ENCODE measurements at regions of chr22 and their contacts with region 1.

Region 1: DNA sequence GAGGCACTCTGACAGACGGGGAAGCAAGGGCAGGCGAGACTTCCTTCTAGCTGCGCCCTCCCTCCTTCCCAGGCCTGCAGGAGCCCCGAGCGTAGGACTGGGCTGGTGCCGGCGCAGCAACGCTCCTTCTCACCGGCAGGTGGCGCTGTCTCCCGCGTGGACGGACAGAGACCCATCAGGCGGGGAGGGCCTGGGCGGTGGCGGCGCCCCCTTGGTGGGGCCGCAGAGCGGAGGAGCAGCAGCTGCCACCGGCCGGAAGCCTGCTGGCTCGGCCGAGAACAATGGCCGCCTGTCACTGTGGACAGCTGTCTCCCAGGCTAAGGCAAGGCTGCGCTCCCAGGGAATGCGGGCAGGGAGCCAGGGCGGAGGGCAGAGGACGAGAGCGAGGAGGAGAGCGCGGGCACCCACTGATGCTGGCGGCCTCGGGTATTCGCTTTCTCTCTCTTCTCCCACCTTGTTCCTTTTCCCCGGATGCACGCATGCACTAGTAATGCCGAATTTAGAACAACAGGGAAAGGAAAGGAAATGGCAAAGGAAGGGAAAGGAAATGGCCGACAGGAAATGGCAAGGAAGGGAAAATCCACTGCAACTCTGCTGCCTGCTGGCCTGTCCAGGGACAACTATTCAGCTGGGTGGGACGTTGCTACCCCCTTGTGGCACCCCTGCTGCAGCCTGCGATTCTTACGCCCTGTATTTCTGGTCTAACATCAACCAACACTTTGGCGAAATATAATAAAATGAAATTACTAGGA is 14.4 kb downstream of the PPM1F start:
- DNase-seq: peak; percentile 85
- H3K4me3 ChIP-seq: peak overlapping the region; percentile 59
- H3K27ac ChIP-seq: peak overlapping the region; percentile 97
- H3K27me3 ChIP-seq: no peaks in the 10 kb centered on the region
- CTCF ChIP-seq: peak; percentile 97

Region 2: DNA sequence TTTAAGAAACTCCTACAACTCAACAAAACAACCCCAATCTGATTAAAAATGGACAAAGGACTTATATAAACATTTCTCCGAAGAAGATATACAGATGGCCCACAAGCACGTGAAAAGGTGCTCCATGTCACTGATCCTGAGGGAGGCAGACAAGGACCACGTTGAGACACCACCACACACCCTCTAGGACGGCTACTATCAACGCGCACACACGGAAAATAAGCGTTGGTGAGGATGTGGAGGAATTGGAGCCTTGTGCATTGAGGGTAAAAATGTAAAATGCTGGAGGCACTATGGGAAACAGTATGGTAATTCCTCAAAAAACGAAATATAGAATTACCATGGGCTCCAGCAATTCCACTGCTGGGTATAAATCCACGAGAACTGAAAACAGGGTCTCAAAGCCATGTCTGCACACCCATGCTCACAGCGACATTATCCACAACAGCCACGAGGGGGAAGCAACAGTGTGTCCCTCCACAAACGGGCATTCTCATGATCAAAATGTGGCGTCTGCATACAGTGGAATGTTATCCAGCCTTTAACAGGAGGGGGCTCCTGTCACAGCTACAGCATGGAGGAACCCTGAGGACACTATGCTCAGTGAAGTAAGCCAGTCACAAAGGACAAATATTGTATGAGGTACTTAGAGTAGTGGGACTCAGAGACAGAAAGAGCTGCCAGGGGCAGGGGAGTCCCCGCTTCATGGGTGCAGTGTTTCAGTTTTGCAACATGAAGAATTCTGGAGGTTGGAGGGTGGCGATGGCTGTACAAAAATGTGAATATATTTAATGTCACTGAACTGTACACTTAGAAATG is 225.1 kb before region 1 on chr22:
- CTCF ChIA-PET with region 1: interaction called, 32 read pairs
- POLR2A ChIA-PET with region 1: no interaction called
- DNase-seq: peak; percentile 52
- H3K4me3 ChIP-seq: no peak overlapping the region; the same call in 1 of the 2 replicates
- H3K27ac ChIP-seq: no peak overlapping the region
- H3K27me3 ChIP-seq: no peaks in the 10 kb centered on the region
- CTCF ChIP-seq: peak; percentile 90

Region 3: GRCh38 chr22:21867528-21868266 is 70.5 kb before region 1 on chr22 and contains the start of gene MAPK1:
- CTCF ChIA-PET with region 1: interaction called, 10 read pairs
- POLR2A ChIA-PET with region 1: no interaction called
- DNase-seq: peak; percentile 33
- H3K4me3 ChIP-seq: peak within 1 kb of the TSS; percentile 90
- H3K27ac ChIP-seq: peak within 1 kb of the TSS; percentile 39
- H3K27me3 ChIP-seq: no peaks in the 10 kb centered on the region
- CTCF ChIP-seq: peak; percentile 34
- polyA plus RNA-seq, gene MAPK1: 152 and 154 TPM in 2 replicates

Region 4: GRCh38 chr22:21952586-21953571 is 14.6 kb after region 1 on chr22 and contains the start of gene PPM1F:
- CTCF ChIA-PET with region 1: interaction called, 13 read pairs
- POLR2A ChIA-PET with region 1: no interaction called
- DNase-seq: peak; percentile 20
- H3K4me3 ChIP-seq: peak within 1 kb of the TSS; percentile 76
- H3K27ac ChIP-seq: no peak within 1 kb of the TSS
- H3K27me3 ChIP-seq: no peaks in the 10 kb centered on the region
- CTCF ChIP-seq: peak; percentile 64
- polyA plus RNA-seq, gene PPM1F: 17.7 and 21.2 TPM in 2 replicates

Region 5: GRCh38 chr22:21996175-21996720 is 58.0 kb after region 1 on chr22:
- CTCF ChIA-PET with region 1: no interaction called
- POLR2A ChIA-PET with region 1: no interaction called
- DNase-seq: no peak
- H3K4me3 ChIP-seq: no peak overlapping the region
- H3K27ac ChIP-seq: no peak overlapping the region
- H3K27me3 ChIP-seq: peaks cover 36% of the 10 kb centered on the region
- CTCF ChIP-seq: no peak

Region 6: GRCh38 chr22:22316589-22316988 is 378.3 kb after region 1 on chr22:
- CTCF ChIA-PET with region 1: no interaction called
- POLR2A ChIA-PET with region 1: no interaction called
- DNase-seq: no peak
- H3K4me3 ChIP-seq: no peak overlapping the region
- H3K27ac ChIP-seq: no peak overlapping the region
- H3K27me3 ChIP-seq: no peaks in the 10 kb centered on the region
- CTCF ChIP-seq: no peak

Measured in AG04450 (cell line).